ENCODE measurements at regions of chr3 and their contacts with region 1.

Region 1: DNA sequence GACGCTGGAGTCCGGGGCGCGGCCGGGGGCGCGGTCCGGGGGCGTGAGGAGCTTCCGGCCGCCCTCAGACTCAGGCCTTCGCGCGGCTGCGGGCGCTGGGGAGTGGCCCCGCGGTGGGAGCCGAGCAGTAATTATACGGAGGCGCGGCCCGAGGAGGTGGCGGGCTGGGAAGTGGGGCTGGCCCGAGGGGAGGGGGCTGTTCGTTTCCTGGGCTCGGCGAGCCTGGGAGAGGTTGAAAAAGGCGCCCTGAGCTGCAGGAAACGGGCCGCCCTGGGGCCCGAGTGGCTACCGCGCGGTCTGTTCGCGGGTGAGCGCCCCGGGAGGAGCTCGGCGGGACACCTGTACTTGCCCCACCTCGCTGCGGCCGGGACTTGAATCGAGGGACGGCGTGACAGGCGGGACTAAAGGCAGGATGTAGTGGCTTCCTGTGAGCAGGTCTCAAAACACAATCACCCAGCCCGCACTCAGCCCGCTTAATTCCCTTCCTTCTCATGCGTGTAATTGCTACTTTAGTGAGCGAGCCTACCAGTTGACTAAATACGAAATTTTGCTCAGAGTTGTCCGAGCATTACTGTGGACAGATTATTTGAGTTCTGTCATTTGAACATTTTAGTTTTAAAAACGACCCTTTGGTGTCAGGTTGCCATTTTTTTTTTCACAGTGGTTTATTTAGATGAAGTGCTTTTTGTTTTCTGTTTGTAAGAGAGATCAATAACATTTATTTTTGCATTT is 860 bp downstream of the RASA2 start:
- DNase-seq: peak; percentile 87 to 94 (median 89)
- H3K4me3 ChIP-seq: peak overlapping the region; percentile 48 to 60
- H3K4me3 Mint-ChIP-seq: peak overlapping the region; percentile 87 to 97 (median 94)
- H3K27ac ChIP-seq: peak overlapping the region; percentile 91
- H3K27ac Mint-ChIP-seq: peak overlapping the region; percentile 72 to 99 (median 95)
- H3K4me1 ChIP-seq: peaks cover 64% of the 10 kb centered on the region
- H3K4me1 Mint-ChIP-seq: peaks cover 59 to 75% (median 65%) of the 10 kb centered on the region in 4 donors
- H3K27me3 ChIP-seq: no peaks in the 10 kb centered on the region
- H3K27me3 Mint-ChIP-seq: no peaks in the 10 kb centered on the region

Region 2: DNA sequence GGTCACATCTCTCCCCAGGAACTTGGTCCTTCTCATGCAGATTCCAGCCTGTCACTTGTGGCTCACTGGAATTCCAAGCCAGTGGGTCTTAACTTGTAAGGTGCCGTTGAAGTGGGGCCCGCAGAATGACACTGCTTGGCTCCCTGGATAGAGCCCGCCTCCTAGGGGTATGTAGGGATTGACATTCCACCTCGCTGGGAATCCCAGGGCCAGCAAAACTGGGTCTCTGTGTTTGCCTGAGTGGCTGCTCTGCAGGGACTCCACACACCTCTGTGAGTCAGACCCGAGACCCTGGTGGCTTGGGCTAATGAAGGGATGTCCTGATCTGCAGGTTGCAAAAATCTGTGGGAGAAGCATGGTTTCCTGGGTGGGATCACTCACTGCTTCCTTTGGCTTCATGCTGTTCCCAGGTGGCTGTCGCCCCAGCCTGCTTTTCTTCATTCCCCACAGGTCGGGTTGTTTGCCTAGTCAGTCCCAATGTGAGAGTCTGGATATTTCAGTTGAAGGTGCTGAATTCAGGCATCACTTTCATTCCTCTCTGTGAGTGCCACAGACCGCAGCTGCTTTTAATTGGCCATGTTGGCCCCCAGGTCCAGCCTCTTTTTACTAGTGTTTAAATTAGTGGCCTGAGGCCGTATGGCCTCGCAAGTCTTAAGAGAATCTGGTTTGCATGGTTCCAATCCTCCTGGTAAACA is 965.8 kb before region 1 on chr3:
- CTCF ChIA-PET with region 1: no interaction called
- POLR2A ChIA-PET with region 1: no interaction called
- intact Hi-C with region 1: no loop called
- DNase-seq: no peak
- H3K4me3 ChIP-seq: no peak overlapping the region
- H3K4me3 Mint-ChIP-seq: no peak overlapping the region
- H3K27ac ChIP-seq: no peak overlapping the region
- H3K27ac Mint-ChIP-seq: no peak overlapping the region
- H3K4me1 ChIP-seq: no peaks in the 10 kb centered on the region
- H3K4me1 Mint-ChIP-seq: no peaks in the 10 kb centered on the region
- H3K27me3 ChIP-seq: no peaks in the 10 kb centered on the region
- H3K27me3 Mint-ChIP-seq: peaks cover 5 to 17% of the 10 kb centered on the region in 2 donors

Region 3: DNA sequence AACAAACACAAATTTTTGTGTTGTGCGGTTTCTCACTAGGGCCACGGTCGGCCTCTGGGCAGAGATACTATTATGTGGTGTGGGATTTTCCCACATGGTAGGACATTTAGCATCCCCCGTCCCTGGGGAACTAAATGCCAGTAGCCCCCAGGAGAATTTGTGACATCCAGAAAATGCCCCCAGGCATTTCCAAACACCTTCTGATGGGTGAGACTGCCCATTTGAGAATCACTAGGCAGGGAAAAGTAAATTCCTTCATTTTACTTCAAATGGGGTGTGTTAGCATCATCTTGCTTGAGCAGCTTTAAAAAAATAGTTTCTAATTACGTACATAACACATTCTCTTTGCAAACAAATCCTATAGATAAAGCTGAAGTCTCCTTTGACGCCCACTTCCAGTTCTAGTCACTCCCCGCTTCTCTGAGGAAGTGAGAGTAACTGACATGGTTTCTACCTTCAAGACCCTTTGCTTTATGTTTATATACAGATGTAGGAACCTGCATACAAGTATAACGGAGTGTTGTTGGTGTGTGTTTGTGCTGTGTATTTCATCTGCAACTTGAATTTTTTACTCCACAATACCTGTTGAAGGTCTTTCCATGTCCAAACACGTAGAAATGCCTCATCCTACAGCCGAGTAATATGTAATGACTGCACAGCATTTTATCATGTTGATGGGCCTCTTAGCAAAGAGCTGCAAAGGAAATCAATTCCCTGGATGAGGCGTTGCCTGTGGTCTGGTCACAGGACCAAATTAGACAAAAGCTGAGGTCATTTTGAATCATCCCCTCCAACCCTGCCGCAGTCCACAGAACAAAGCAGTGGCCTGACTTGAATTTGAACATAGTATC is 150.8 kb before region 1 on chr3:
- CTCF ChIA-PET with region 1: no interaction called
- POLR2A ChIA-PET with region 1: no interaction called
- intact Hi-C with region 1: no loop called
- DNase-seq: no peak
- H3K4me3 ChIP-seq: no peak overlapping the region
- H3K4me3 Mint-ChIP-seq: no peak overlapping the region
- H3K27ac ChIP-seq: no peak overlapping the region
- H3K27ac Mint-ChIP-seq: peak overlapping the region in 1 of 7 donors; percentile 43
- H3K4me1 ChIP-seq: no peaks in the 10 kb centered on the region
- H3K4me1 Mint-ChIP-seq: no peaks in the 10 kb centered on the region
- H3K27me3 ChIP-seq: no peaks in the 10 kb centered on the region
- H3K27me3 Mint-ChIP-seq: peaks cover 13 to 18% of the 10 kb centered on the region in 2 donors

Region 4: DNA sequence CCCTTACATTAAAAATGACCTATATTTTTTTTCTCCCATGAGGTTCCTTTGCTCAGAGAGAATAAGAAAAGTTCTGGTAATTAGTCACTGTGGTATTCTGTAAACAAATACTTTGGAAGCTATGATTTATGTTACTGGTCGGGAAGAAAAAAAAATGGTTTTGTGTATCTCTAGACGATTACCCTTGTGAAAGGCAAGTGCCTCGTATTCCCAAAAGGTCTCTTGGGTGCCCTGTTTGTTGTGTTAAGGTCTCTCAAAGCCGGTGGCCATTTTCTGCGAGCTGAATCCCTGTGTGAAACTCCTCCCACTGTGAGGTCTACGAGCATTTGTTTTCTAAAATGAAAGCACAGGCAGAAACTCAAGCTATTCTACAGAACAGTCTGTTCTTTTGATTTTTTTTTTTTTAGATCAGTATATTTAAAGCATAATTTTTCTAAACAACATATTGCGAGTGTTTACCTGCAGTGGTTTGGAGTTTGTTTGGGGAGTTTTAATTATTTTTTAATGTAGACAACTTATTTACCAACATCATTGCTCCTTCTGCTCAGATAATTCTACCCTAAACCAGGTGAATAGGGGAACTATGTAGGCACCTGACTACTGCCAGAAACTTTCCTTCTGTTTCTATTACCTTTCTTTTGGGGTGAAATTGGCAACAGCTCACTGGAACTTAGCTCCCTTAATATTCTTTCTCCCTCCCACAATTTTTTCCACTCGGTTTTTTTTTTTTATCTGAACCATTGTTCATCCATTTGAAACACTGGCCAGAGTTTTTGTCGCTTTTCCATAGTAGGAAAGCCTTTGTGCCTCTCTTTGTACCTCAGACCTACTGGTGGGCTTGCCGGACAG is 75.4 kb before region 1 on chr3:
- CTCF ChIA-PET with region 1: no interaction called
- POLR2A ChIA-PET with region 1: interaction called, 23 read pairs
- intact Hi-C with region 1: loop called (anchors 5 kb)
- DNase-seq: peak; percentile 66 to 76 (median 72)
- H3K4me3 ChIP-seq: peak overlapping the region in 1 of 2 donors; percentile 21
- H3K4me3 Mint-ChIP-seq: peak overlapping the region; percentile 67 to 90 (median 86)
- H3K27ac ChIP-seq: peak overlapping the region; percentile 77
- H3K27ac Mint-ChIP-seq: peak overlapping the region; percentile 94 to 100 (median 99)
- H3K4me1 ChIP-seq: peaks cover 71% of the 10 kb centered on the region
- H3K4me1 Mint-ChIP-seq: peaks cover 57 to 85% (median 73%) of the 10 kb centered on the region in 4 donors
- H3K27me3 ChIP-seq: no peaks in the 10 kb centered on the region
- H3K27me3 Mint-ChIP-seq: no peaks in the 10 kb centered on the region

Region 5: GRCh38 chr3:141514382-141514781 is 26.7 kb after region 1 on chr3:
- CTCF ChIA-PET with region 1: interaction called, 4 read pairs
- POLR2A ChIA-PET with region 1: interaction called, 23 read pairs
- intact Hi-C with region 1: no loop called
- DNase-seq: no peak
- H3K4me3 ChIP-seq: no peak overlapping the region
- H3K4me3 Mint-ChIP-seq: no peak overlapping the region
- H3K27ac ChIP-seq: no peak overlapping the region
- H3K27ac Mint-ChIP-seq: peak overlapping the region in 5 of 7 donors; percentile 4 to 60 (median 30)
- H3K4me1 ChIP-seq: peaks cover 34% of the 10 kb centered on the region
- H3K4me1 Mint-ChIP-seq: peaks cover 32 to 56% (median 48%) of the 10 kb centered on the region in 4 donors
- H3K27me3 ChIP-seq: no peaks in the 10 kb centered on the region
- H3K27me3 Mint-ChIP-seq: no peaks in the 10 kb centered on the region

Region 6: DNA sequence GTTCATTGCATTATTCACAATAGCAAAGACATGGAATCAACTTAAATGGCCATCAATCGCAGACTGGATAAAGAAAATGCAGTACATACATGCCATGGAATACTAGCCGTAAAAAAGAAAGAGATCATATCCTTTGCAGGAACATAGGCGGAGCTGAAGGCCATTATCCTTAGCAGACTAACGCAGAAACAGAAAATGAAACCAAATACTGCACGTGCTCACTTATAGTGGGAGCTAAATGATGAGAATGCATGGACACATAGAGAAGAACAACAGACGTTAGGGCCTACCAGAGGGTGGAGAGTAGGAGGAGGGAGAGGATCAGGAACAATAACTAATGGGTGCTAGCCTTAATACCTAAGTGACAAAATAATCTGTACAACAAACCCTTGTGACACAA is 57.0 kb after region 1 on chr3:
- CTCF ChIA-PET with region 1: interaction called, 3 read pairs
- POLR2A ChIA-PET with region 1: interaction called, 95 read pairs
- intact Hi-C with region 1: no loop called
- DNase-seq: peak; percentile 51 to 59 (median 53)
- H3K4me3 ChIP-seq: peak overlapping the region in 1 of 2 donors; percentile 39
- H3K4me3 Mint-ChIP-seq: peak overlapping the region; percentile 41 to 84 (median 73)
- H3K27ac ChIP-seq: peak overlapping the region; percentile 57
- H3K27ac Mint-ChIP-seq: peak overlapping the region; percentile 49 to 95 (median 87)
- H3K4me1 ChIP-seq: peaks cover 48% of the 10 kb centered on the region
- H3K4me1 Mint-ChIP-seq: peaks cover 57 to 81% (median 70%) of the 10 kb centered on the region in 4 donors
- H3K27me3 ChIP-seq: no peaks in the 10 kb centered on the region
- H3K27me3 Mint-ChIP-seq: no peaks in the 10 kb centered on the region

Region 7: GRCh38 chr3:141796081-141796888 is 308.6 kb after region 1 on chr3:
- CTCF ChIA-PET with region 1: no interaction called
- POLR2A ChIA-PET with region 1: interaction called, 8 read pairs
- intact Hi-C with region 1: loop called (anchors 5 kb)
- DNase-seq: peak; percentile 61 to 85 (median 66)
- H3K4me3 ChIP-seq: peak overlapping the region; percentile 61 to 76
- H3K4me3 Mint-ChIP-seq: peak overlapping the region; percentile 90 to 96 (median 92)
- H3K27ac ChIP-seq: peak overlapping the region; percentile 65
- H3K27ac Mint-ChIP-seq: peak overlapping the region; percentile 97 to 99 (median 98)
- H3K4me1 ChIP-seq: peaks cover 52% of the 10 kb centered on the region
- H3K4me1 Mint-ChIP-seq: peaks cover 46 to 60% (median 55%) of the 10 kb centered on the region in 4 donors
- H3K27me3 ChIP-seq: no peaks in the 10 kb centered on the region
- H3K27me3 Mint-ChIP-seq: no peaks in the 10 kb centered on the region

Measured in CD4-positive, alpha-beta memory T cell (primary cell).